Mammary epithelial cell (primary cell): ENCODE measurements at regions of chr2 and their contacts with region 1.

Region 1: DNA sequence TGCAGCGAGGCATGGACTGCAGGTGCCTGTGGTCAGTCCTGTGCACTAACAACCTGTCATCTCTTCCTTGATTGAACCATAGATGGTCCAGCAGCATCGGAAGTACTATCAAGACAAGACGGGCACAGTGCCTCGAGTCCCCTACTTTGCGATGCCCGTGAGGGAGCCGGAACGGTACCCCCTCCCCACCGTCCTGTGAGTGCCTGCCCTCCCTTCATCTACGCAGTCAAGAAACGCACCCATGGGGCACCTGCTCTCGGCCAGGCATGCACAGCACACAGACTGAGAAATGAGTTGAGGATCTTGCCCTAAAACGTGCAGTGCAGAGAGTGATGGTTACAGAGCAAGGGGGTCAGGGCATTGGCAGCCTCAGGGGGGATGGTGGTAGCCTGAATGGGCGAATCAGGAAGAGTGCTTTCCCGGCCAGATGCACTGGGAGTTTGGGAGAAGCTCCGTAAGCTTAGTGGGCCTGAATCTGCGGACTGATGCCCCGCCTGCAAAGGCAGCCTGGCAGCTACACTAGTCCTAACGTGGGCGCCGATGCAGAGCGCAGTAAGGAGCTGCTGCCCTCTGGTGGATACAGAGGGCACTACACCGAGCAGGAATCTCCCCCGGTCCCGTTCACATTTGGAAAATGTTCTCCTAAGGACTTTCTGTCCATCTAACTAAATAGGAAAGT is 63.6 kb downstream of the CIB4 start:
- DNase-seq: peak; percentile 46
- H3K4me3 ChIP-seq: no peak overlapping the region
- H3K27ac ChIP-seq: no peak overlapping the region
- H3K4me1 ChIP-seq: peaks cover 13% of the 10 kb centered on the region
- H3K27me3 ChIP-seq: no peaks in the 10 kb centered on the region
- CTCF ChIP-seq: peak; percentile 98

Region 2: GRCh38 chr2:26401739-26402541 is 175.6 kb before region 1 on chr2 and contains the start of gene DRC1:
- CTCF ChIA-PET with region 1: no interaction called
- dilution Hi-C with region 1: no loop called
- in situ Hi-C with region 1: no loop called
- intact Hi-C with region 1: loop called (anchors 5 kb)
- DNase-seq: peak; percentile 70
- H3K4me3 ChIP-seq: peak within 1 kb of the TSS in 2 of 3 experiments; percentile 41 to 50
- H3K27ac ChIP-seq: peak within 1 kb of the TSS; percentile 63
- H3K4me1 ChIP-seq: peaks cover 34% of the 10 kb centered on the region
- H3K27me3 ChIP-seq: no peaks in the 10 kb centered on the region
- CTCF ChIP-seq: no peak
- total RNA-seq, gene DRC1: 0.33 to 0.38 TPM

Region 3: GRCh38 chr2:26477911-26478253 is 99.7 kb before region 1 on chr2 and contains the start of gene OTOF:
- CTCF ChIA-PET with region 1: no interaction called
- dilution Hi-C with region 1: no loop called
- in situ Hi-C with region 1: no loop called
- intact Hi-C with region 1: no loop called
- DNase-seq: peak; percentile 49
- H3K4me3 ChIP-seq: no peak within 1 kb of the TSS
- H3K27ac ChIP-seq: no peak within 1 kb of the TSS
- H3K4me1 ChIP-seq: no peaks in the 10 kb centered on the region
- H3K27me3 ChIP-seq: no peaks in the 10 kb centered on the region
- CTCF ChIP-seq: no peak
- total RNA-seq, gene OTOF: not detected

Region 4: DNA sequence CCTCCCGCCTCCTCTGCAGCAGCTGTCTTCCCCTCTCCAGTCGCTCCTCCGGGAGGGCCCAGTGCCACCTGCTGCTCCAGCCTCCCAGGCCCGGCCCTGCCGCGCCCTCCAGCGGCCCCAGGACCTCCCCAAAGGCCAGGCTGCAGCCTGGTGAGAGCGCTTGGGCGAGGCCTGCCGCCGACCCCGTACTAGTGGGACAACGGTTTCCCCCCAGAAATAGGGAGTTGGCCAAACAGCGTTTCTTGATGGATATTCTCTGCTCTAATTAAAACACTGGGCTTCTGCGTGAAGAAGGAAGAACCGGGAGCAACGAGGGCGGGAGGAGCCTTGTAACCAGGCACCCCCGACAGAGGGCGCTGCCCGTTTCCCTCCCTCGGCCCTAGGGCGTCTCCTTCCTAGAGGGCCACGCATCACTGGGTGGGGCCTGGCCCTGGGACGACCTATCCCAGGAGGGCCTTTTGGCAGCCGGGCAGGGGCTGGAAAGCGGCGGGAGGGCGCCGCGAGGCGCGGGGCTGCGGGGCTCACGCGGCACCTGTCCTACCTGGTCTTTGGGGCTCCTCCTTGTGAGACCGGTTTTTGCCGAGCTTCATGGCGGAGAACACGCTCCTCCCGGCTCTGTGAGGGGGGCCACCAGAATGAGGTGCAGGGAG is 74.2 kb before region 1 on chr2:
- CTCF ChIA-PET with region 1: no interaction called
- dilution Hi-C with region 1: no loop called
- in situ Hi-C with region 1: no loop called
- intact Hi-C with region 1: loop called (anchors 1 kb)
- DNase-seq: peak; percentile 44
- H3K4me3 ChIP-seq: peak overlapping the region in 1 of 3 experiments; percentile 24
- H3K27ac ChIP-seq: no peak overlapping the region
- H3K4me1 ChIP-seq: peaks cover 4% of the 10 kb centered on the region
- H3K27me3 ChIP-seq: peaks cover 2% of the 10 kb centered on the region
- CTCF ChIP-seq: peak; percentile 78 to 90

Region 5: GRCh38 chr2:26530696-26531095 is 46.9 kb before region 1 on chr2:
- CTCF ChIA-PET with region 1: no interaction called
- dilution Hi-C with region 1: loop called (anchors 5 kb)
- in situ Hi-C with region 1: no loop called
- intact Hi-C with region 1: no loop called
- DNase-seq: no peak
- H3K4me3 ChIP-seq: no peak overlapping the region
- H3K27ac ChIP-seq: no peak overlapping the region
- H3K4me1 ChIP-seq: no peaks in the 10 kb centered on the region
- H3K27me3 ChIP-seq: no peaks in the 10 kb centered on the region
- CTCF ChIP-seq: no peak

Region 6: GRCh38 chr2:26555246-26556133 is 22.1 kb before region 1 on chr2:
- CTCF ChIA-PET with region 1: no interaction called
- dilution Hi-C with region 1: no loop called
- in situ Hi-C with region 1: no loop called
- intact Hi-C with region 1: no loop called
- DNase-seq: no peak
- H3K4me3 ChIP-seq: no peak overlapping the region
- H3K27ac ChIP-seq: no peak overlapping the region
- H3K4me1 ChIP-seq: no peaks in the 10 kb centered on the region
- H3K27me3 ChIP-seq: peaks cover 1% of the 10 kb centered on the region
- CTCF ChIP-seq: no peak